ENCODE measurements at regions of chr2 and their contacts with region 1.

Region 1: DNA sequence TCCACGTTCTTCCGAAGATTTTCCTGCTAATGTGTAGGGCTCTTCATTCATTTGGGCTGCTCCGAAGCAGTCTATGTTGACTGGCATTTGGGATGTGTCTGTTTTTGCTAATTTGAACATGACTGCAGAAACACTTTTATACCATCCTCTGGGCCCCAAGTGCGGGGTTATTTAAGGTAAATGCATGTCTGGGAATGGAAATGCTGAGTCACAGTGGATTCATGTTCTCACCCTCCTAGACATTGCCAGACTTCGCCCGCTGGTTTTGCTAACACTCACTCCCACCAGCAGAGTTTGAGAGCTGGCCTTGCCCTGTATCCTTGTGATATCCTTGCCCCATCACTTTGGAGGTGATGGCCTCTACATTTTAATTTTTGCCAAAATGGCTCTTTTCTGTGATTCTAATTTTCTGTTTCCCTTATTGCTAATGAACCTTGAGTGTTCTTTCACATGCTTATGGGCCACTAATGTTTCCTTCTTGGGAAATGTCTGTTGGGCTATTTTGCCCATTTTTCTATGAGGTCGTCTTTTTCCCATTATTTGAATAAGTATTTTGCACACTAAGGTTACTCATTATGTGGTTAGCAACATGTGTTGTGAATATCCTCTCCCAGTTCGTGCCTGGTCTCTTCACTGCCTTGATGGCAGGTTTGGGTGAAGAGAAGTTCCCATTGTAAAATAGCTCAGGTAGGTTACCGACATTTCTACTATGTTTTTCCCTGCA is 204.1 kb downstream of the GLI2 start:
- DNase-seq: no peak
- H3K4me3 ChIP-seq: no peak overlapping the region
- H3K27ac ChIP-seq: no peak overlapping the region
- H3K4me1 ChIP-seq: peaks cover 27 to 51% of the 10 kb centered on the region in 2 donors
- H3K27me3 ChIP-seq: no peaks in the 10 kb centered on the region
- CTCF ChIP-seq: no peak

Region 2: DNA sequence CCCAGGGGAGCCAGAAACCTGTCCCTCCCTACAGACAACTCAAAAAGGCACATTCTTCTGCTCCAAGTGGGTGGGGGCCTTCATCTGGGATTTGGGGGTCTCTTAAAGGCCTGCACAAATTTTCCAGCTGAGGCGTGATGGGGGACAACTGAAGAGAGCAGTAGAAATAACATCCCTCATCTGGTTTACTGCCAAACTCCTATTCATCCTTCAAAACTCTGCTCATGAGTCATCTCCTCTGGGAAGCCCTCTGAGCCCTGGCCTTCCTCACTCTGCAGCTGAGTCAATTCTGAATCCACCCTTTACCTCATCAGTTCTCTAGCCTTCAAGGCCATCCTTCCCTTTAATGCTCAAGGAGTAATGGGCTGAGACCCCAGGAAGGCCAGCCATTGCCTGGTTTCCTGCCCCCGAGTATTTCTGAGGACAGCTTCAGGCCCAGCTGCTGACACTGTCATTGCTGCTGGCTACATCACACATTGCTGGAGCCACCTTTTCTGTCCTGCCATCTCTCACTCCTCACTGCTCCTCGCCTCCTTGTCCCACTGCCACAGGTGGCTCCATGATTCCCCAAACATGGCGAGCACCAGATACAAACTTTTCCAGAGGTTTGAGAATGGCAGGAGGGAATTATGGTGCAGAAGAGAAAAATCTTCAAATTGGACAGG is 236.3 kb before region 1 on chr2:
- intact Hi-C with region 1: loop called (anchors 5 kb)
- DNase-seq: no peak
- H3K4me3 ChIP-seq: no peak overlapping the region
- H3K27ac ChIP-seq: no peak overlapping the region
- H3K4me1 ChIP-seq: no peaks in the 10 kb centered on the region
- H3K27me3 ChIP-seq: no peaks in the 10 kb centered on the region
- CTCF ChIP-seq: no peak

Measured in ascending aorta (tissue), 2 donors.